ENCODE measurements at regions of chr2 and their contacts with region 1.

Region 1: DNA sequence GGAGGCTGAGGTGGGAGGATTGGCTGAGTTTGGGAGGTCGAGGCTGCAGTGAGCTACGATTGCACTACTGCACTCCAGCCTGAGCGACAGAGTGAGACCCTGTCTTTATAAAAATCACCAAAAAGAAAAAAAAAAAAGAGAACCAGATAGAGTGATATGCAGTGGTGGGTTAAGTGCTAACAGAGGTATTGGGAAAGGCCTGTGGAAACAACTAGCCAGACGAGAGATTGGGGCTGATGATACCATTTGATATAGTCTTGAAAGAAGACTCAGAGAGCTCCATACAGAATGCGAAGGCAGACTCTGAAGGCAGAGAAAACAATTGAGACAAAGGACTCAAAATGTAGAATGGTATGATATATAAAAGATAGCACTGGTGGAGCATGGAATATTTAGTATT is 134.1 kb downstream of the CDC42EP3 start:
- DNase-seq: no peak
- H3K4me3 Mint-ChIP-seq: no peak overlapping the region
- H3K27ac Mint-ChIP-seq: no peak overlapping the region
- H3K4me1 Mint-ChIP-seq: no peaks in the 10 kb centered on the region
- H3K27me3 Mint-ChIP-seq: no peaks in the 10 kb centered on the region

Region 2: DNA sequence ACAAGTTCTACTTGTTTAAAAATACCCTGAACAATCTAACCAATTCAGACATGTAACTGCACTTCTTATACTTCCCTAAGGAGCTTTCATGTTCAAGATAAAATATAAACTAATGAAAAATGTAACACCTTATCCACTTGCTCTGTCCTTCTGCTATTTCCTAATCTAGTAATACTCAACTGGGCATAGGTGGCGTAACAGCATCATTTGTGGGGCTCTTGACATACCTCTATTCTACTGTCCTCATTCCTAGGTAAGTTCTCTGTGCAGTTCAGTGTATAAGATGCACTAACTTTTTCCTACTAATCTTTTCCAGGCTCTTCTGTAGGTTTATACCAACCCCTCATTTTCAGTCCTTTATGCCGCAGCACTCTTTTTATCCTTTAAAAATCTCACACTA is 249.3 kb before region 1 on chr2:
- CTCF ChIA-PET with region 1: interaction called, 3 read pairs
- intact Hi-C with region 1: loop called (anchors 2 kb)
- DNase-seq: peak; percentile 59
- H3K4me3 Mint-ChIP-seq: no peak overlapping the region
- H3K27ac Mint-ChIP-seq: no peak overlapping the region
- H3K4me1 Mint-ChIP-seq: no peaks in the 10 kb centered on the region
- H3K27me3 Mint-ChIP-seq: no peaks in the 10 kb centered on the region